Aorta (tissue), 5 donors: ENCODE measurements at regions of chr10 and their contacts with region 1.

Region 1: GRCh38 chr10:73886085-73886529 is 11.8 kb upstream of the CAMK2G start:
- DNase-seq: peak; percentile 85
- ATAC-seq: peak; percentile 90
- H3K4me3 ChIP-seq: no peak overlapping the region
- H3K27ac ChIP-seq: peak overlapping the region; percentile 92 to 93
- H3K4me1 ChIP-seq: peaks cover 2 to 4% of the 10 kb centered on the region in 2 donors
- H3K27me3 ChIP-seq: no peaks in the 10 kb centered on the region

Region 2: GRCh38 chr10:73910764-73911552 is 24.9 kb after region 1 on chr10 and contains the start of gene PLAU:
- intact Hi-C with region 1: loop called in 1 of 2 experiments (anchors 2 kb)
- DNase-seq: peak; percentile 82 to 84
- ATAC-seq: peak; percentile 38
- H3K4me3 ChIP-seq: peak within 1 kb of the TSS; percentile 50 to 62
- H3K27ac ChIP-seq: no peak within 1 kb of the TSS
- H3K4me1 ChIP-seq: no peaks in the 10 kb centered on the region
- H3K27me3 ChIP-seq: no peaks in the 10 kb centered on the region
- total RNA-seq, gene PLAU: 33.6 to 35.4 TPM

Region 3: GRCh38 chr10:73940634-73941221 is 54.6 kb after region 1 on chr10:
- intact Hi-C with region 1: loop called (anchors 1 to 2 kb)
- DNase-seq: peak; percentile 92 to 97
- ATAC-seq: peak; percentile 96
- H3K4me3 ChIP-seq: no peak overlapping the region
- H3K27ac ChIP-seq: peak overlapping the region; percentile 22 to 59
- H3K4me1 ChIP-seq: no peaks in the 10 kb centered on the region
- H3K27me3 ChIP-seq: no peaks in the 10 kb centered on the region

Region 4: GRCh38 chr10:73968098-73968521 is 82.0 kb after region 1 on chr10:
- intact Hi-C with region 1: no loop called
- DNase-seq: no peak
- ATAC-seq: no peak
- H3K4me3 ChIP-seq: no peak overlapping the region
- H3K27ac ChIP-seq: peak overlapping the region in 1 of 2 donors; percentile 76
- H3K4me1 ChIP-seq: peaks cover 0 to 1% of the 10 kb centered on the region in 2 donors
- H3K27me3 ChIP-seq: no peaks in the 10 kb centered on the region

Region 5: GRCh38 chr10:74234569-74234968 is 348.5 kb after region 1 on chr10:
- intact Hi-C with region 1: loop called in 1 of 2 experiments (anchors 2 kb)
- DNase-seq: no peak
- ATAC-seq: no peak
- H3K4me3 ChIP-seq: no peak overlapping the region
- H3K27ac ChIP-seq: no peak overlapping the region
- H3K4me1 ChIP-seq: peaks cover 0 to 1% of the 10 kb centered on the region in 2 donors
- H3K27me3 ChIP-seq: no peaks in the 10 kb centered on the region